ENCODE measurements at regions of chr18 and their contacts with region 1.

Region 1: DNA sequence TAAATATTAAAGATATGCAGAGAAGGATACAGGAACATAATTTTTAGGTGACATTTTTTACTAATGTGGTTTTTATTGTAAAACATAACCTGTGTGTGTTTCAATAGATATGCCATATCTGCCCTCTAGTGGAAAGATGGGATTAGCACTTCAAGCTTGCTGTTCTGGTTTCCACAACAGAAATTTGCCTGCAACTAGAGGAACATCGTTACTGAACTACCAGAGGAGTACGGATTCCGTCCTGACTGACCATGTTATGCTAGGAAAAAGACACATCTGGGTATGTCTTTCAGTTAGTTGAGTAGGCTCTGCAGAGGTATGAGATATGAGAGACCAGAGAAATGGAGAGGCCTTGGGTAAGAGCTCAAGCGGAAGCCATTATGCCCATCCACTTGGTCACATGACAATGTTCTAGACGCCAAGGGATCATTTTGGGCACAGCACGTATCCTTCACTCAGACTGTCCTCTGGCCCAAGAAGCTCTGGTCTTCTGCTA is 104.9 kb downstream of the MBD2 start:
- DNase-seq: peak; percentile 55
- ATAC-seq: peak; percentile 92
- H3K4me3 ChIP-seq: peak overlapping the region in 2 of 3 experiments; percentile 8 to 51; a peak in 3 of 6 replicates
- H3K27ac ChIP-seq: no peak overlapping the region
- H3K4me1 ChIP-seq: no peaks in the 10 kb centered on the region
- H3K27me3 ChIP-seq: no peaks in the 10 kb centered on the region
- CTCF ChIP-seq: peak; percentile 75
- EP300 ChIP-seq: no peak
- POLR2A ChIP-seq: no peak
- RAD21 ChIP-seq: peak; percentile 28; the same call in 1 of the 2 replicates

Region 2: DNA sequence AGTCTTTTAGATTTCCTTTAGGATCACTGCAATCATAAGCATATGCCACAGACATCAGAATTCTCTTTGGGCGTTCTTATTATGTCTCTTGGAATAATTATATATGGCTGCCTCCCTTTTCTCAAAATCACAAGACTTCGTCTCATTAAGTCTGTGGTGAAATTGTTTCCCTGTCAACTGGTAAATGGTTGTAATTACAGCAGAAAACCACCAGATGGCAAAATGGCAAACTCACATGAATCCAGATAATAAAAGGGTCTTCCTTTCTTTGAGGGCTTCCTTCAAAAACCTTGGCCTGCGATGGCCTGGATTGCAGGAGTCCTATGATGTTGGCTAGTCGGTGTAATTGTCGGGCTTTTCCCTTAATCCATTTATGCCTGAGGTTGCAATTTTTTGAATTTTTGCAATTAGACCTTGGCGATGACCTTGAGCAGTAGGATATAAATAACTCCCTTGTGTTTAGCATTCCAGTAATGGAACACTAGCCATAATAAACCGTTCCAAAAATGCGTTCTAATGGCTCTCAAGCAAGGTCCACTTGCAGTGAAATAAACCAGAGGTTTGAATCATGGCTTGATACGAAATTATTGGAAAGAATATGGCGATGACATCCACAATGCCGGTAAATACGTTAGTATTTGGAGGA is 551.5 kb before region 1 on chr18:
- CTCF ChIA-PET with region 1: interaction called, 10 read pairs
- POLR2A ChIA-PET with region 1: no interaction called
- in situ Hi-C with region 1: no loop called
- intact Hi-C with region 1: no loop called
- DNase-seq: peak; percentile 29
- ATAC-seq: no peak
- H3K4me3 ChIP-seq: no peak overlapping the region
- H3K27ac ChIP-seq: no peak overlapping the region
- H3K4me1 ChIP-seq: no peaks in the 10 kb centered on the region
- H3K27me3 ChIP-seq: no peaks in the 10 kb centered on the region
- CTCF ChIP-seq: peak; percentile 52
- EP300 ChIP-seq: no peak
- POLR2A ChIP-seq: no peak
- RAD21 ChIP-seq: no peak

Region 3: DNA sequence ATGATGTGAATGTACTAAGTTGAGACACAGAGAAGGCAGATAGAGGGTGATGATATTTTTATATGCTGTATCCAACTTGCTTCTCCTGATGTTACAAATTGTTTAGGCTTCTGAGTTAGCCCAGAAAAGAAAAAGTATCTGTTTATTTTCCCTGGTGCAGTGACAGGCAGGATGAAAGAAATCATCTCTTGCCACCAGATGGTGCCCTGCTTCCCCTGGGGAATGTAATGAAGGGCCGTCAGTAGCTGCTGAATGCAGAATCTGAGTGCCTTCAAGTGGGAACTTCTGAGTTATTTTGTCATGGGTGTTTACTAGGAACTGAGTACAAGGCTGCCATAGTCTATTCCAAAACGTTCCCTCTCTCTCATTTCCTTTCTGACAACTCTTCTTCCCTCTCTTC is 420.7 kb before region 1 on chr18:
- CTCF ChIA-PET with region 1: interaction called, 7 read pairs
- POLR2A ChIA-PET with region 1: no interaction called
- in situ Hi-C with region 1: no loop called
- intact Hi-C with region 1: loop called (anchors 1 kb)
- DNase-seq: peak; percentile 33
- ATAC-seq: peak; percentile 82
- H3K4me3 ChIP-seq: no peak overlapping the region
- H3K27ac ChIP-seq: no peak overlapping the region
- H3K4me1 ChIP-seq: no peaks in the 10 kb centered on the region
- H3K27me3 ChIP-seq: no peaks in the 10 kb centered on the region
- CTCF ChIP-seq: peak; percentile 55
- EP300 ChIP-seq: no peak
- POLR2A ChIP-seq: no peak
- RAD21 ChIP-seq: no peak

Region 4: GRCh38 chr18:53909668-53910067 is 209.9 kb before region 1 on chr18:
- CTCF ChIA-PET with region 1: interaction called, 3 read pairs
- POLR2A ChIA-PET with region 1: no interaction called
- in situ Hi-C with region 1: loop called (anchors 25 kb)
- intact Hi-C with region 1: loop called (anchors 1 kb)
- DNase-seq: peak; percentile 7
- ATAC-seq: no peak; the same call in 2 of the 3 replicates
- H3K4me3 ChIP-seq: no peak overlapping the region
- H3K27ac ChIP-seq: no peak overlapping the region
- H3K4me1 ChIP-seq: no peaks in the 10 kb centered on the region
- H3K27me3 ChIP-seq: no peaks in the 10 kb centered on the region
- CTCF ChIP-seq: peak; percentile 19
- EP300 ChIP-seq: no peak
- POLR2A ChIP-seq: no peak
- RAD21 ChIP-seq: no peak